ENCODE measurements at regions of chr9 and their contacts with region 1.

Region 1: GRCh38 chr9:133566817-133567216 is 32.3 kb downstream of the ADAMTSL2 start:
- DNase-seq: no peak

Region 2: GRCh38 chr9:133545494-133546286 is 21.1 kb before region 1 on chr9:
- intact Hi-C with region 1: no loop called
- DNase-seq: no peak

Region 3: DNA sequence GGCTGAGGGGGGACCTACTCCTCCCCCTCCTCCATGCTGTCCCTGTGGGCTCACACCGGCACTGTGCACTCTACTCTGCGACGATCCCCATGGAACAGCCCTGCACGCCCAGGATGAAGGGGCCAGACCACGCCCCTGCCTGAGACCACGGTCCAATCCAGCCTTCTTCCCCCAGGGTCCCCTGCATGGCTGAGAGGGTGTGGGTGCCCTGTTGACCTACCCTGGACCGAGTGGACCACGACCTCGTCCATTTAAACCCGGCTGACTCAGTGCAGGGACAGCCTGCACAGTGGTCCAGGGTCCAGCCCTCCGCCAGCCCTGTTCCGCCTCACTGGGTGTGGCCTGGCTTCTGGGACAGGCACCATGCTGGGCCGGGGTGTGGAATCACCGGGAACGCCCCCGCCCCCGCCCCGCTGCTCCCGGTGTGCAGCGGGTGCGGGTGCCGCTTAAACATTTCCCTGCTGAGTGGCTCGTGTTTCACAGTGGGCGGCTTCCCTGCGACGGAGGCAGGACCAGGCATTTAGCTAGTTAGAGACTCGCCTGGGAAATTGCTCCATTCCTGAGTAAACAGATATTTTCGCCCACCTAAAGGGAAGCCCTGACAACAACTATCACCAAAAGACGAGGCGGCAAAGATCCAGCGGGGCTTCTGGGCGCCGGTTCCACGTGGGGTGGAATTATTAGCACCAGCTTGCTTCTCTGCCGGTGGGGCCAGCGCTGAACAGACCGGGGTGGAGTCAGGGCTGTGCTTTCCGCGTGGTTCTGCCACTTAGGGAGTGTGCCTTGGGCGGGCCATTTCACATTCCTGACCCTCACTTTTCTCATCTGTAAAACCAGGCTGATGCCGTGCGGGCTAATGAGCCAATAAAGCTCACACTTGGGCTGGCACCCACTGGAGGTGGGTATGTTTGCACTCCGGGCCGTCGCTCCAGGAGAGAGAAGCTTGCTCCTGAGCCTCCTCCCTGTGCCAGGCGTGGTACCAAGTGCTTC is 91.9 kb after region 1 on chr9:
- intact Hi-C with region 1: loop called (anchors 2 kb)
- DNase-seq: no peak

Region 4: GRCh38 chr9:133691626-133692363 is 125.0 kb after region 1 on chr9:
- intact Hi-C with region 1: no loop called
- DNase-seq: no peak

Region 5: GRCh38 chr9:133792721-133793470 is 226.1 kb after region 1 on chr9:
- intact Hi-C with region 1: no loop called
- DNase-seq: peak; percentile 89

Measured in cardiac septum (tissue), 1 donor.